Heart right ventricle (tissue), 16 donors: ENCODE measurements at regions of chr12 and their contacts with region 1.

Region 1: GRCh38 chr12:9039397-9039977 is 50.1 kb downstream of the KLRG1 start:
- DNase-seq: no peak
- ATAC-seq: peak in 7 of 8 donors; percentile 61 to 82 (median 75)
- H3K4me3 ChIP-seq: no peak overlapping the region
- H3K27ac ChIP-seq: no peak overlapping the region
- H3K4me1 ChIP-seq: peaks cover 0 to 16% (median 0%) of the 10 kb centered on the region in 9 donors
- H3K27me3 ChIP-seq: no peaks in the 10 kb centered on the region
- CTCF ChIP-seq: peak; percentile 51 to 83 (median 77)

Region 2: GRCh38 chr12:8681041-8681902 is 358.2 kb before region 1 on chr12:
- intact Hi-C with region 1: loop called in 5 of 10 experiments (anchors 10 kb)
- DNase-seq: peak in 1 of 2 donors; percentile 32
- ATAC-seq: peak; percentile 27 to 91 (median 79)
- H3K4me3 ChIP-seq: peak overlapping the region in 4 of 10 donors; percentile 16 to 28 (median 24)
- H3K27ac ChIP-seq: peak overlapping the region in 9 of 10 donors; percentile 20 to 75 (median 61)
- H3K4me1 ChIP-seq: peaks cover 0 to 25% (median 6%) of the 10 kb centered on the region in 9 donors
- H3K27me3 ChIP-seq: no peaks in the 10 kb centered on the region
- CTCF ChIP-seq: no peak

Region 3: DNA sequence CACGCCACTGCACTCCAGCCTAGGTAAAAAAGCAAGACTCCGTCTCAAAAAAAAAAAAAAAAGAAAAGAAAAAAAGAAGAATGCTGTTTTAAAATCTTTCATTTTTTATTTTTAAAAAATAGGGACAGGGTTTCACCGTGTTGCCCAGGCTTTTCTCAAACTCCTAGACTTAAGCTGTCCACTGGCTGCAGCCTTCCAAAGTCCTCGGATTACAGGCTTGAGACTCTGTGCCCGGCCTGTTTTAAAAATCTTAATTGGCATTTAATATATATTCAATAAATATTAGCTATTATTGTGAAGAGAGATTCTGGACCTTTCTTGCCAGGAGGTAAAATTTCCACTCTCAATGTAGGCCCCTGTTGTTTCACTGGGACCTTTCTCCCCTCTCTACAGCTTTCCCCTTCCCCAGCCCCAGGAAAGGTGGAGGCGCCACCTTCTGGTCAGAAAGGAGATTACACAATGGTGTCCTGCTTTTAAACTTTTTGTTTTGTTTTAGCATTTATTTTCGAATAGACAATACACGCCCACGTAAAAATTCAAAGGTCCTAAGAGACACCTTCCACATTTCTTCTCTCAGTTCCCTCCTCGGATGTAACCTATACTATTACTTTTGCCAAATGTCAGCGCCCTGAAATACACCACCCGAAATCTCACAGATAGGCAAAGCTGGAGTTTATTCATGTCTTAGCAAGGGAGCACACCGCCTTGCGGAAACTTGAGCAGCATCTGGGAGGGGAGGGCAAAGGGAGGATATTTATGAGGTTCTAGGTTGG is 149.0 kb before region 1 on chr12:
- intact Hi-C with region 1: loop called in 1 of 10 experiments (anchors 5 kb)
- DNase-seq: peak in 1 of 2 donors; percentile 66
- ATAC-seq: peak; percentile 55 to 88 (median 82)
- H3K4me3 ChIP-seq: peak overlapping the region in 9 of 10 donors; percentile 18 to 58 (median 55)
- H3K27ac ChIP-seq: peak overlapping the region in 4 of 10 donors; percentile 36 to 54 (median 44)
- H3K4me1 ChIP-seq: peaks cover 0 to 5% (median 0%) of the 10 kb centered on the region in 9 donors
- H3K27me3 ChIP-seq: no peaks in the 10 kb centered on the region
- CTCF ChIP-seq: peak; percentile 72 to 94 (median 87)

Region 4: DNA sequence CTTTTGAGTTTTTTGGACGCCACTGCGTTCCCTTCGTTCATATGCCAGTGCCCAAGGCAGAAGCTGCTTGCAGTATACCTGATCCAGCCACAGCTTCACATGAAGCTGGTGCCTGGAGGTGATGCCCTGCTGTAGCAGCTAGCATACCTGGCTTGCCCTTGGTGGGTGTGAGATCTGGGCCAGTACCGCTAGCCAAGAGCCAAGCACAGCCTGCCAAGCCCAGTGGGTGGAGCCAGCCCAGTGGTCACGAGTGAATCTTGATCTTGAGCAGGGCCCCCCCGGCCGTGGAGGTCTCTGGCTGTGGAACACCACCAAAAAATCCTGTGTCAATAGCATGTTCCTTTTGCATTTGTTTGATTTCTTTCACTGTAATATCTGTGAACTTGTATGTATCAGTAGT is 82.7 kb before region 1 on chr12:
- intact Hi-C with region 1: loop called in 8 of 10 experiments (anchors 2 to 5 kb)
- DNase-seq: peak in 1 of 2 donors; percentile 14
- ATAC-seq: peak in 3 of 8 donors; percentile 34 to 72 (median 53)
- H3K4me3 ChIP-seq: no peak overlapping the region
- H3K27ac ChIP-seq: no peak overlapping the region
- H3K4me1 ChIP-seq: peaks cover 0 to 10% (median 0%) of the 10 kb centered on the region in 9 donors
- H3K27me3 ChIP-seq: no peaks in the 10 kb centered on the region
- CTCF ChIP-seq: no peak

Region 5: GRCh38 chr12:8980137-8980536 is 59.4 kb before region 1 on chr12:
- intact Hi-C with region 1: no loop called
- DNase-seq: no peak
- ATAC-seq: no peak
- H3K4me3 ChIP-seq: no peak overlapping the region
- H3K27ac ChIP-seq: no peak overlapping the region
- H3K4me1 ChIP-seq: peaks cover 0 to 12% (median 0%) of the 10 kb centered on the region in 9 donors
- H3K27me3 ChIP-seq: no peaks in the 10 kb centered on the region
- CTCF ChIP-seq: no peak